Esophagus muscularis mucosa (tissue), 4 donors: ENCODE measurements at regions of chr5 and their contacts with region 1.

Region 1: GRCh38 chr5:135887351-135887864 is 8.2 kb downstream of the IL9 start:
- DNase-seq: no peak
- H3K4me3 ChIP-seq: no peak overlapping the region
- H3K27ac ChIP-seq: no peak overlapping the region
- H3K4me1 ChIP-seq: peaks cover 0 to 24% (median 20%) of the 10 kb centered on the region in 4 donors
- H3K27me3 ChIP-seq: no peaks in the 10 kb centered on the region
- CTCF ChIP-seq: peak; percentile 77 to 90 (median 85)
- EP300 ChIP-seq: no peak
- POLR2A ChIP-seq: no peak

Region 2: GRCh38 chr5:135864503-135865435 is 22.6 kb before region 1 on chr5:
- intact Hi-C with region 1: no loop called
- DNase-seq: no peak
- H3K4me3 ChIP-seq: no peak overlapping the region
- H3K27ac ChIP-seq: no peak overlapping the region
- H3K4me1 ChIP-seq: peaks cover 0 to 7% (median 0%) of the 10 kb centered on the region in 4 donors
- H3K27me3 ChIP-seq: no peaks in the 10 kb centered on the region
- CTCF ChIP-seq: no peak
- EP300 ChIP-seq: no peak
- POLR2A ChIP-seq: no peak

Region 3: GRCh38 chr5:135930029-135930948 is 42.9 kb after region 1 on chr5:
- intact Hi-C with region 1: loop called (anchors 5 kb)
- DNase-seq: no peak
- H3K4me3 ChIP-seq: peak overlapping the region; percentile 49 to 56 (median 52)
- H3K27ac ChIP-seq: no peak overlapping the region
- H3K4me1 ChIP-seq: peaks cover 6 to 15% (median 12%) of the 10 kb centered on the region in 4 donors
- H3K27me3 ChIP-seq: peaks cover 5 to 40% (median 16%) of the 10 kb centered on the region in 4 donors
- CTCF ChIP-seq: no peak
- EP300 ChIP-seq: no peak
- POLR2A ChIP-seq: no peak

Region 4: DNA sequence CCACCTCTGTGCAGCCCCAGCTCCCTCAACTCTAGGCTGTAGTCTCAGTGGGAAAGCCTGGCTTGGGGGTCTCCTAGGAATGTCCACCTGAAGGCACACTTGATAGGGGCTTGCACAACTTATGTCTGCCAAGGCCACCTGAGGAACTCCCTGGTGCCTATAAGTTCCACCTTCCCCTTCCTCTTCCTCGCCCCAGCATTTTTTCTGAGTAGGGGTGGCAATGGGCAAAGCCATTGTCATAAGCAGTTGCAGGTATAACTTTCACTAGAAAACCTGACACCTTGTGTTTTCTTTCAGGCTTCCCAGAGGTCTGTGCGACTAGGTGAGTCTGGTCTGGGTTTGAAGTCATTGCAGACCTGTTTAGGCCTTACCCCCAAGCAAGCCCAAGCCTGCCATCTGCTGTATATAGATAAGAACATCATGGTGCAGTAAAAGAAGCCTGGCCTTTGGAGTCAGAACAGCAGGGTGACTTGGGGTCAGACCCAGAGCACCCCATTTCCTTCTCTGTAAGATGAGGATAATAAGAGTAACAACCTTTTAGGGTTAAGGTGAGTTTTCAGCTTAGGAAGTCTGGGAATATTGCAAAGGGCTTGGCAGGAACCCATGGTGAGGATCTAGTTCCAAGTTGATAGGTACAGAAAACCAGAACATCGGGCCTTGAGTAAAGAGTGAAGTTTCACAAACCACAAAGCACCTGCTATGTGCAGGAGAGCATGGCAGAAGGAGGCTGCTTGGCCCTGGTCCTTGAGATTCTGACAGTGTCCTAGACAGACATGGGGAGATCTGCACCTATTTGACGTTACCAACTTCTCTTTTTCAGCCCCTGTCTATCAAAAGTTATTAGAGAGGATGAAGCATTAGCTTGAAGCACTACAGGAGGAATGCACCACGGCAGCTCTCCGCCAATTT is 175.2 kb after region 1 on chr5:
- intact Hi-C with region 1: loop called (anchors 5 kb)
- DNase-seq: no peak
- H3K4me3 ChIP-seq: no peak overlapping the region
- H3K27ac ChIP-seq: peak overlapping the region in 1 of 4 donors; percentile 1
- H3K4me1 ChIP-seq: peaks cover 26 to 63% (median 54%) of the 10 kb centered on the region in 4 donors
- H3K27me3 ChIP-seq: no peaks in the 10 kb centered on the region
- CTCF ChIP-seq: peak; percentile 36 to 57 (median 52)
- EP300 ChIP-seq: no peak
- POLR2A ChIP-seq: no peak

Region 5: GRCh38 chr5:136080483-136081216 is 193.2 kb after region 1 on chr5:
- intact Hi-C with region 1: loop called (anchors 5 kb)
- DNase-seq: peak; percentile 94
- H3K4me3 ChIP-seq: peak overlapping the region; percentile 37 to 60 (median 44)
- H3K27ac ChIP-seq: peak overlapping the region; percentile 77 to 84 (median 82)
- H3K4me1 ChIP-seq: peaks cover 17 to 33% (median 33%) of the 10 kb centered on the region in 4 donors
- H3K27me3 ChIP-seq: no peaks in the 10 kb centered on the region
- CTCF ChIP-seq: no peak
- EP300 ChIP-seq: no peak
- POLR2A ChIP-seq: no peak

Region 6: DNA sequence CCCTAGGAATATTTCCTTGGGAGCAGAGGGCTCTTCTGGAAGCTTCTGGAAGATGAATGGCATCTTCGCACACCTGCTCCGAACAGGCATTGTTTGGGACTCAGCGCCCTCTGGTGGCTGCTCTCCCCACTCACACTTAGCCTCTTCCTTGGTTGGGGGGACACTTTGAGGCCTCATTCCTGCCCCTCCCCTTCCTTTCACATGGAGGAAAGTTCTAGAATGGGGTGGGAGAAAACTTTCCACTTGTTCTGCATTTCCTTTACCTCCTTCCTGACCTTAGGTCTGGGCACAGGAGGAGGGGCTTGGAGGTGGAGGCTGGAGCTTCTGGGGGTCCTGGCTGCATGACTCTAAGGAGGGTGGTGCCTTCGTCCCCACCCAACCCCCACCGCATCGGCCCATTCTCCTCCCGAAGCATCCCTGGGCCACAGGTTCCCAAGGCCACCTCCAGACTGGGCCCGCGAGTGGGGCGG is 324.9 kb after region 1 on chr5:
- intact Hi-C with region 1: loop called (anchors 1 kb)
- DNase-seq: no peak
- H3K4me3 ChIP-seq: no peak overlapping the region
- H3K27ac ChIP-seq: no peak overlapping the region
- H3K4me1 ChIP-seq: no peaks in the 10 kb centered on the region
- H3K27me3 ChIP-seq: peaks cover 0 to 12% (median 2%) of the 10 kb centered on the region in 4 donors
- CTCF ChIP-seq: peak; percentile 72 to 87 (median 81)
- EP300 ChIP-seq: no peak
- POLR2A ChIP-seq: no peak